Activated CD8-positive, alpha-beta T cell treated with anti-CD3 and anti-CD28 coated beads, Interleukin-2, amount 10 ng/mL, durations not matched to agents 7 days and 5 days (primary cell): ENCODE measurements at regions of chr10 and their contacts with region 1.

Region 1: DNA sequence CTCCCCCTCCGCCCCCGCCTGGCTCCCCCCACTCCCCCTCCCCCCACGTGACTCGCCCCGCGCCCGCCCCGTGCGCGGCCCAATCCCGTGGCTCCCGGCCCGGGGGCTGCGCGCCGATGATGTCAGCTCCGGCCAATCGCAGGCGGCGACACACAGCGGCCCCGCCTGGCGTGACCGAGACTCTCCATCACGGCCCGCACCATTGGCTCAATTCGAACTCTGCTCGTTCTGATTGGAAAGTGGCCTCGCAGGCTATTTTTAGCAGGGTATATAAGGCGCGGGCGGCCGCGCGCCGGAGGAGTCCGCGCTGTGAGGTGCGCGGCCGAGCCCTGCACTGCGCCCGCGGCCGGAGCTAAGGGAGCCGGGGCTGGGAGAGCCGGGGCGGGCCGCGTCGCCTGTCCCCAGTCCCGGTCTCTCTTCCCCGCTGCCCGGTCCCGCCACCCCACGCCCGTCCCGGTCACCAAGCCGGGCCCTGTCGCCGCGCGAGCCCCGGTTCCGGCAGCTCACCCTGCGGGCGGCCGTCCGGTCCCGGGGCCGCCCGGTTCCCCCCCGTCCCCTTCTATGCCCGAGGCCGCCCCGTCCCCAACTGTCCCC is 345 bp upstream of the KLF6 start:
- DNase-seq: peak; percentile 99
- ATAC-seq: peak; percentile 70
- H3K4me3 Mint-ChIP-seq: peak overlapping the region; percentile 95
- H3K27ac Mint-ChIP-seq: peak overlapping the region; percentile 98
- H3K4me1 Mint-ChIP-seq: peaks cover 43% of the 10 kb centered on the region
- H3K27me3 Mint-ChIP-seq: no peaks in the 10 kb centered on the region

Region 2: GRCh38 chr10:3538658-3539531 is 246.5 kb before region 1 on chr10:
- CTCF ChIA-PET with region 1: no interaction called
- POLR2A ChIA-PET with region 1: no interaction called
- DNase-seq: no peak
- ATAC-seq: no peak
- H3K4me3 Mint-ChIP-seq: no peak overlapping the region
- H3K27ac Mint-ChIP-seq: no peak overlapping the region
- H3K4me1 Mint-ChIP-seq: no peaks in the 10 kb centered on the region
- H3K27me3 Mint-ChIP-seq: no peaks in the 10 kb centered on the region

Region 3: DNA sequence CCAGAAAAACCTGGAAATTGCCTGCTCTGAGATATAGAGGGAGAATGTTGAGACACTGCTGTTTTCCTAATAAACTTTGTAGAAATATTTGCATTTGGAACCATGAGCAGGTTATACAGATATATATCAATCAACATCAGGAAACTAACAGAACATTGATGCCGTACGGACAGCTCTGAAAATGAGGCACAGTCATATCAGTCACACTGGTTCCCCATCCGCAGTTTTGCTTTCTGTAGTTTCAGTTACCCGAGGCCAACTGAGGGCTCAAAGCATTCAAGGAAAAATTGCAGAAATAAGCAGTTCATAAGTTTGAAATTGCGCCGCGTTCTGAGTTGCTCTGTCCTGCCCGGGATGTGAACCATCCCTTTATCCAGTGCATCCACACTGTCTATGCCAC is 138.3 kb before region 1 on chr10:
- CTCF ChIA-PET with region 1: no interaction called
- POLR2A ChIA-PET with region 1: no interaction called
- DNase-seq: no peak
- ATAC-seq: no peak
- H3K4me3 Mint-ChIP-seq: no peak overlapping the region
- H3K27ac Mint-ChIP-seq: no peak overlapping the region
- H3K4me1 Mint-ChIP-seq: no peaks in the 10 kb centered on the region
- H3K27me3 Mint-ChIP-seq: peaks cover 28% of the 10 kb centered on the region

Region 4: GRCh38 chr10:3668276-3668965 is 116.9 kb before region 1 on chr10:
- CTCF ChIA-PET with region 1: no interaction called
- POLR2A ChIA-PET with region 1: interaction called, 12 read pairs
- DNase-seq: peak; percentile 81
- ATAC-seq: peak; percentile 94
- H3K4me3 Mint-ChIP-seq: peak overlapping the region; percentile 72
- H3K27ac Mint-ChIP-seq: peak overlapping the region; percentile 92
- H3K4me1 Mint-ChIP-seq: peaks cover 41% of the 10 kb centered on the region
- H3K27me3 Mint-ChIP-seq: peaks cover 3% of the 10 kb centered on the region

Region 5: DNA sequence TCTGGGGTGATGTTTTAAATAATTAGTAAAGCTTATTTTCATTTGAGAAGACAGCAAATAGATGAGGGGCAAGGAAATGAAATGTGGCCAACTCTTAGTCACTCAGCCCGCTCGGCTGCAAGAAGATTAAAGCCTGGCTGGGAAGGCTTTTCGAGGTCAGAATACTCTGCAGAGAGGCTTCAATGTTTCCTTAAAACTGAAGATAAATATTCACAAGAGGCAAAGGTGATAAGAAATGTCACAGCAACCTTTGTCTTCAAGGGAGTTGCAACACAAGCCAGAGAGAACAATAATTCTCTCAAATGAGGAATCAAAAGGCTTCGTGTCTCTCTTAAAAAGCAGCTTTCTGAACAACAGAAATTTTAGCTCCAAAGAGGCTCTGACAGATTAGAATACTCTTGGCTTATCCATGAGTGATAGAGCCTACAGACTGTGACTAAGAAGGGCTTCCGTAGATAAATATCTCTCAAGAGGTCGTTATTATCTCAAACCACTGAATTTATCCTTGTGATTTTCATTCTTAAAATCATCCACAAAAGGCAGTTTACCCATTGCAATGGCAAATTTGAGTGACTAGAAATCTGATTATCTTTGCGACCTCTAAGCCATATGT is 92.9 kb before region 1 on chr10:
- CTCF ChIA-PET with region 1: no interaction called
- POLR2A ChIA-PET with region 1: no interaction called
- DNase-seq: no peak
- ATAC-seq: no peak
- H3K4me3 Mint-ChIP-seq: no peak overlapping the region
- H3K27ac Mint-ChIP-seq: no peak overlapping the region
- H3K4me1 Mint-ChIP-seq: no peaks in the 10 kb centered on the region
- H3K27me3 Mint-ChIP-seq: no peaks in the 10 kb centered on the region

Region 6: GRCh38 chr10:3811291-3811870 is 26.0 kb after region 1 on chr10:
- CTCF ChIA-PET with region 1: interaction called, 20 read pairs
- POLR2A ChIA-PET with region 1: interaction called, 658 read pairs
- DNase-seq: peak; percentile 68
- ATAC-seq: peak; percentile 52
- H3K4me3 Mint-ChIP-seq: peak overlapping the region; percentile 71
- H3K27ac Mint-ChIP-seq: peak overlapping the region; percentile 91
- H3K4me1 Mint-ChIP-seq: peaks cover 85% of the 10 kb centered on the region
- H3K27me3 Mint-ChIP-seq: no peaks in the 10 kb centered on the region

Region 7: GRCh38 chr10:3852147-3852904 is 67.0 kb after region 1 on chr10:
- CTCF ChIA-PET with region 1: interaction called, 6 read pairs
- POLR2A ChIA-PET with region 1: interaction called, 69 read pairs
- DNase-seq: peak; percentile 68
- ATAC-seq: peak; percentile 98
- H3K4me3 Mint-ChIP-seq: no peak overlapping the region
- H3K27ac Mint-ChIP-seq: peak overlapping the region; percentile 54
- H3K4me1 Mint-ChIP-seq: peaks cover 29% of the 10 kb centered on the region
- H3K27me3 Mint-ChIP-seq: no peaks in the 10 kb centered on the region

Region 8: GRCh38 chr10:3935141-3935540 is 149.8 kb after region 1 on chr10:
- CTCF ChIA-PET with region 1: no interaction called
- POLR2A ChIA-PET with region 1: interaction called, 67 read pairs
- DNase-seq: peak; percentile 72
- ATAC-seq: peak; percentile 93
- H3K4me3 Mint-ChIP-seq: peak overlapping the region; percentile 51
- H3K27ac Mint-ChIP-seq: peak overlapping the region; percentile 89
- H3K4me1 Mint-ChIP-seq: peaks cover 61% of the 10 kb centered on the region
- H3K27me3 Mint-ChIP-seq: no peaks in the 10 kb centered on the region

Region 9: GRCh38 chr10:4034907-4035598 is 249.7 kb after region 1 on chr10:
- CTCF ChIA-PET with region 1: no interaction called
- POLR2A ChIA-PET with region 1: interaction called, 16 read pairs
- DNase-seq: peak; percentile 51
- ATAC-seq: peak; percentile 76
- H3K4me3 Mint-ChIP-seq: peak overlapping the region; percentile 57
- H3K27ac Mint-ChIP-seq: peak overlapping the region; percentile 92
- H3K4me1 Mint-ChIP-seq: peaks cover 41% of the 10 kb centered on the region
- H3K27me3 Mint-ChIP-seq: no peaks in the 10 kb centered on the region

Region 10: GRCh38 chr10:4316161-4316810 is 530.9 kb after region 1 on chr10:
- CTCF ChIA-PET with region 1: no interaction called
- POLR2A ChIA-PET with region 1: no interaction called
- DNase-seq: no peak
- ATAC-seq: no peak
- H3K4me3 Mint-ChIP-seq: no peak overlapping the region
- H3K27ac Mint-ChIP-seq: no peak overlapping the region
- H3K4me1 Mint-ChIP-seq: no peaks in the 10 kb centered on the region
- H3K27me3 Mint-ChIP-seq: peaks cover 19% of the 10 kb centered on the region